Right ventricle myocardium superior (tissue), 1 donor: ENCODE measurements at regions of chr5 and their contacts with region 1.

Region 1: DNA sequence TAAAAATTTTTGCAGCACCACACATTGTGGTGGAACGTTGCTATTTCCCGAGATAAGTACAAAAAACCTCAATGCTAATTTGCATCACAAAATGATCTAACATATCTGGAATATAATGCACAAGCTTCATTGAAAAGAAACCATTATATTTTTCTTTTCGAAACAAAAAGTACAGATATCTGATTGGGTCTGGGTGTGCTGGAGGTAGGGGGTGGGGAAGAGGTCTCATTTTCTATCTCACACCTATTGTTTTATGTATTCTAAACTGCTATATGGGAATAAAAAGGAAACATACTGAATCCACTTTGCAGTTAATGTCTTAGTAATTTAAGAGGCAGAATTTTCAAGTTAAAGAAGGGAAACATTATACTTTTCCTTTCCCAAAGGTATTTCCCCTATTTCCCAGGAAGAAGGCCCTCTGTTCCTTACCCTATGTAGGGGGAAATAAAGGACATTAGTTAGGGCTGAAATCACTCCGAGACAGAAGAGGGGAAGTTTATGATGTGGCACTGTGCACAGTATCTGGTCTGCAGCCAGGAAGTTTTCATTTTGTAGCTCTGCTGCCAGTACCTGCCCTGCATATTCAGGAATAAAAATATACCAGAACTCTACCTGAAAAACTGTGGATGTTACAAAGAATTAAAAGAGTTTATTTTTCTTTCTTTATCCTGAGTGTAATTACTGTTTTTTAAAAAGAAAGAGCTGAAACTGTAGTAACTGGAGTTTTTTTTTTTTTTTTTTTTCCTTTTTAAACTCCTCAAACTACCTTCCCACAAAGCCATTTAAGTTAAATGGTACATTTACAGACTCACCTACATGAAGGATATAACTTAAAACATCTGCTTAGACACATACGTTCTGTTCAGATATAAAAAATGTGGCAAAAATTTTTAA is 7.4 kb downstream of the MEF2C start:
- DNase-seq: no peak
- ATAC-seq: peak; percentile 75

Region 2: DNA sequence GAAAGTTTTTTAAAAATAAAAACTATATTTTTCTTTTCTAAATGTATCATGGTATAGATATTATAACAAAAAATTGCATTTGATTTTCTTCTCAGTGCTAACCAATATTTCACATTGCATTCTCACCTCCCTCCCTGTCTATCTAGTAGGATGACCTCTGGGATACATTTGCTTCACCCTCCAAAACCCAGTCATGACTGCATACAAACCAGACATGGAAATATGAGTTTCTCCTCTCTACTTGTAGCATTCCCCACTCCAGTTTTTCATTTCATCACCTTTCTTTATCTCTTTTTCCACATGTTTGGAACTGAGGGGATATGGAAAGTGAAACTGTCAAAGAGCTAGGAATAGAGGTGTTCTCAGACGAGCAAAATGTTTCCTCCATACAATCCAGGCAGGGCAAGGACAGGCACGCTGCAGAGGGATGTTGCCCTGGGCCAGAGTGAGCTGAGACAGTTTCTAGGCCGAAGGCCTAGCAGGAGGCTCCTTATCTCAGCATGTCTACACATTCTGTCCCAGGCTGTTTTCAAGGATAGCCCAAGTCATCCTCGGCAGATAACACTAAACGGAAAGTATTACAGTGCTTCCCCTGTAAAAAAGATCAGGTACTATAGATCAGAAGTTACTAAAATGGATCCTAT is 39.3 kb before region 1 on chr5:
- intact Hi-C with region 1: loop called (anchors 5 kb)
- DNase-seq: peak; percentile 55
- ATAC-seq: peak; percentile 83

Region 3: GRCh38 chr5:89849830-89850512 is 974.4 kb after region 1 on chr5:
- intact Hi-C with region 1: no loop called
- DNase-seq: no peak
- ATAC-seq: no peak